Lower leg skin (tissue), 4 donors: ENCODE measurements at regions of chr5 and their contacts with region 1.

Region 1: DNA sequence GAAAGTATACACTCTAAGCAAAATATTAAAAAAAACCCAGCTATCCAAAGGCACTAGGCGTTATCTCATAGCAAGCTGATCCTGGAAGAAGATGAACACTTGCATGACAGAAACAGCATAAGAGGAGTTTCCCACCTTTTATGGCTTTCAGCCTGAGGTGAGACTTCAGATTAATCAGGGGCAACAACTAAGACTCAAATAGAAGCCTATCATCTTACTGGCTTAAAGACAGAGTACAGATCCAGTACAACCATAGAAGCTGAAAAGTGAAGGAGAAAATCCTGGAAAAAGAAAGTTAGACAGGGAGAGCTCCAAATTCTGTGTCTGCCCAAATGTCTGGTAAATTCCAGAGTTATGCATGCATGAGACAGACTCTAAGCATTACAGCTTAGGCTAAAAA is 360.8 kb upstream of the KCNN2 start:
- DNase-seq: no peak
- H3K4me3 ChIP-seq: no peak overlapping the region
- CTCF ChIP-seq: no peak
- POLR2A ChIP-seq: no peak

Region 2: GRCh38 chr5:114018186-114018585 is 17.1 kb after region 1 on chr5:
- intact Hi-C with region 1: loop called (anchors 2 kb)
- DNase-seq: no peak
- H3K4me3 ChIP-seq: no peak overlapping the region
- CTCF ChIP-seq: no peak
- POLR2A ChIP-seq: no peak

Region 3: DNA sequence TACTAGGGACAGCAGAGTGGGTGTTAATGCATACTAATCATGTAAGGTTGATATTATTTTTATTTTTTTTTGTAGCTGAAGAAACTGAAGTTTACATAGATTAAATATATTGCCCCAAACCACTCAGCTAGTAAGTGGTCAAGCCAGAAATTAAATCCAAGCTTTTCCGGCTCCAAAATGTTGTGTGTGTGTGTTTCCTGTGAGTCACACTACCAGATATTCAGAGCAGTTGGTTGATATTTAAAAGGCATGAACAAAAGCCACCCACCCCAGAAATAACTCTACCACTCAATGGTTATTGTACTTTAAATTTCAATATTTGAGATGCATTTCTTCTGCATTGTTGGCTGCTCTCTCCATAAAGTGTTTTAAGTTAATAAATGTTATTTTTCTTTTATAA is 390.2 kb after region 1 on chr5:
- intact Hi-C with region 1: no loop called
- DNase-seq: no peak
- H3K4me3 ChIP-seq: no peak overlapping the region
- CTCF ChIP-seq: no peak
- POLR2A ChIP-seq: no peak